Heart right ventricle (tissue), 16 donors: ENCODE measurements at regions of chr11 and their contacts with region 1.

Region 1: GRCh38 chr11:35029979-35030378 is 109.0 kb upstream of the CD44 start:
- DNase-seq: no peak
- ATAC-seq: no peak
- H3K4me3 ChIP-seq: no peak overlapping the region
- H3K27ac ChIP-seq: peak overlapping the region in 5 of 10 donors; percentile 55 to 78 (median 68)
- H3K4me1 ChIP-seq: peaks cover 0 to 21% (median 12%) of the 10 kb centered on the region in 9 donors
- H3K27me3 ChIP-seq: no peaks in the 10 kb centered on the region
- CTCF ChIP-seq: no peak

Region 2: GRCh38 chr11:34940026-34940677 is 89.8 kb before region 1 on chr11:
- intact Hi-C with region 1: no loop called
- DNase-seq: no peak
- ATAC-seq: peak in 2 of 8 donors; percentile 72 to 77
- H3K4me3 ChIP-seq: no peak overlapping the region
- H3K27ac ChIP-seq: no peak overlapping the region
- H3K4me1 ChIP-seq: peaks cover 0 to 26% (median 6%) of the 10 kb centered on the region in 9 donors
- H3K27me3 ChIP-seq: no peaks in the 10 kb centered on the region
- CTCF ChIP-seq: no peak

Region 3: GRCh38 chr11:35165423-35166368 is 135.7 kb after region 1 on chr11:
- intact Hi-C with region 1: loop called in 1 of 10 experiments (anchors 10 kb)
- DNase-seq: peak in 1 of 2 donors; percentile 43
- ATAC-seq: peak in 6 of 8 donors; percentile 23 to 51 (median 42)
- H3K4me3 ChIP-seq: peak overlapping the region in 1 of 10 donors; percentile 10
- H3K27ac ChIP-seq: peak overlapping the region in 5 of 10 donors; percentile 44 to 87 (median 60)
- H3K4me1 ChIP-seq: peaks cover 5 to 97% (median 45%) of the 10 kb centered on the region in 9 donors
- H3K27me3 ChIP-seq: no peaks in the 10 kb centered on the region
- CTCF ChIP-seq: no peak